Activated T-helper 1 cell treated with anti-CD3 and anti-CD28 coated beads, Interleukin-12 subunit alpha, Interleukin-12 subunit beta, Interleukin-2, Interleukin-4 antibody, amounts not matched to agents 30 ng/mL and 10 ng/mL and 1 ng/mL, durations not matched to agents 14 hours and 24 hours and 36 hours (primary cell): ENCODE measurements at regions of chr15 and their contacts with region 1.

Region 1: GRCh38 chr15:46420990-46421389 is 786.2 kb downstream of the SQOR start:
- DNase-seq: no peak
- H3K4me3 Mint-ChIP-seq: no peak overlapping the region
- H3K27ac Mint-ChIP-seq: no peak overlapping the region
- H3K4me1 Mint-ChIP-seq: no peaks in the 10 kb centered on the region
- H3K27me3 Mint-ChIP-seq: no peaks in the 10 kb centered on the region

Region 2: GRCh38 chr15:46489276-46489675 is 68.3 kb after region 1 on chr15:
- intact Hi-C with region 1: loop called (anchors 10 kb)
- DNase-seq: no peak
- H3K4me3 Mint-ChIP-seq: no peak overlapping the region
- H3K27ac Mint-ChIP-seq: no peak overlapping the region
- H3K4me1 Mint-ChIP-seq: no peaks in the 10 kb centered on the region
- H3K27me3 Mint-ChIP-seq: no peaks in the 10 kb centered on the region